Right cardiac atrium (tissue), 5 donors: ENCODE measurements at regions of chr20 and their contacts with region 1.

Region 1: GRCh38 chr20:47629907-47630306 is 128.2 kb downstream of the NCOA3 start:
- DNase-seq: no peak
- ATAC-seq: no peak
- H3K4me3 ChIP-seq: no peak overlapping the region
- H3K27ac ChIP-seq: no peak overlapping the region
- H3K4me1 ChIP-seq: no peaks in the 10 kb centered on the region
- H3K27me3 ChIP-seq: no peaks in the 10 kb centered on the region

Region 2: DNA sequence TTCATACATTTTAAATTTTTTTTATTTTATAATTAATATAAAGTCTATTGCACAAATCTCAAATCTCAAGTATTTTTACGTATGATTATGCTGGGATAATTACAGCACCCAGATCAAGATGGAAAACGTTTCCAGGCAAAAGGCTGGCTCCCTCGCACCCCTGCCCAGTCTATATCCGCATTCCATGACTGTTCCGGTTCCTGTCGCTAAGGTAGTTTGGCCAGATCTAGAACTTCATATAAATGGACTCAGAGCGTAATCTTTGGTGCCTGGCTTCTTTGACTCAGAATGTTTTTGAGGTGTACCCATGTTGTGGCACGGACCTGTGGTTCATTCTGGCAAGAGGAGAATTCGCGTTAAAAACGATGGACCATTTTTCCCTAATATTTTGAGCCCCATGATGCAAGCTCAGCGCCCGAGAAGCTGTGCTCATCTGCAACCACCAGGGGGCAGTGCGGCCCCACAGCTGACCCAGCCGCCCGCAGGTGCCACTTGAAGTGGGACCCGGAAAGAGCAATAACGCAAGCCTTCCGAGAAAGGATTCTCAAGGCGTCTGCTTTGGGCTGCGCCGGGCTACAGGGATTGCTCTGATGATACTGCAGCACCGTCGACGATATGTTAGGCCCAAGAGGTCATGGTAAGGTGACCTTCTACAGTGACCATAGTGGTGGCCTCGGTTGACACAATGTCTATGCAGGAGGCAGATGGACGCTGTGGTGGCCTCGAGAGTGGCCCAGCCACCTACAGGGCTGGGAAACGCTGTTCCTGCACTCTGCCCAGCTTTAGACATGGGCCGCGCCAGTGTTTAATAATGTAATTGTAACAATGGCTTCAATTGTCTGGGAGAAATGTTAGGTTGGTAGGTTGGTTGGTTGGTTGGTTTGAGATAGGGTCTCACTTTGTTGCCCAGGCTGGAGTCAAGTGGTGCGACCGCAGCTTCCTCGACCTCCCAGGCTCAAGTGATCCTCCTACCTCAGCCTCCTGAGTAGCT is 433.5 kb before region 1 on chr20:
- intact Hi-C with region 1: loop called in 2 of 4 experiments (anchors 5 to 10 kb)
- DNase-seq: peak; percentile 72 to 88 (median 86)
- ATAC-seq: peak; percentile 71 to 76
- H3K4me3 ChIP-seq: no peak overlapping the region
- H3K27ac ChIP-seq: no peak overlapping the region
- H3K4me1 ChIP-seq: peaks cover 3% of the 10 kb centered on the region
- H3K27me3 ChIP-seq: no peaks in the 10 kb centered on the region

Region 3: DNA sequence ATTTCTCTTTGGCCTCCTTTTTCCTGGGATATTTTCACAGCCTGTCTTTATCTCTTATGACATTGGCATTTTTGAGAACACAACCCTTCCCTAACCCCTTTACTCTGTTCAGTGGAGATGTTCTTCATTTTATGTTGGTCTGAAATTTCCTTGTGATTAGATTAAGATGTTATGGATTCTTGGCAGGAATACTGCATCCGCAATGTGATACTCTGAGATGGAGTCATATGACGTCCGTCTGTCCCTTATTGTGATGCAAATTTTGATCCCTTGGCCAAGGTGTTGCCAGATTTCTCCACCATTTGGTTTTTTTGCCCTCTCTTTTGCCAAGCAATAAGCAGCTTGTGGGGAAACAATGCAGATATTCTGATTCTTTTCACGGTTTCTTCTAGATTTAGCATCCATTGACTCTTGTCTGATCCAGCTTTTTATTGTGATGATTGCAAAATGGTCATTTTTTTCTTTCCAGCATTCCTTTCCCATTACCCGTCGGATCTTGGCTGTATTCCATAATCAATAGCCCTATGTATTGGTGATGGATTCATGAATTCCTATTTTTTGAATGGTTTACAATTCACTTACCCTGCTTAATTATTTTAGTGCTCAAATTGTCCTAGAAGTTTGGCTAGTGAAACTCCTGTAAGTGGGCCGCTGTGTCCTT is 43.1 kb before region 1 on chr20:
- intact Hi-C with region 1: no loop called
- DNase-seq: no peak
- ATAC-seq: peak in 1 of 2 donors; percentile 41
- H3K4me3 ChIP-seq: no peak overlapping the region
- H3K27ac ChIP-seq: no peak overlapping the region
- H3K4me1 ChIP-seq: peaks cover 3% of the 10 kb centered on the region
- H3K27me3 ChIP-seq: no peaks in the 10 kb centered on the region